Posterior vena cava (tissue), 2 donors: ENCODE measurements at regions of chr20 and their contacts with region 1.

Region 1: DNA sequence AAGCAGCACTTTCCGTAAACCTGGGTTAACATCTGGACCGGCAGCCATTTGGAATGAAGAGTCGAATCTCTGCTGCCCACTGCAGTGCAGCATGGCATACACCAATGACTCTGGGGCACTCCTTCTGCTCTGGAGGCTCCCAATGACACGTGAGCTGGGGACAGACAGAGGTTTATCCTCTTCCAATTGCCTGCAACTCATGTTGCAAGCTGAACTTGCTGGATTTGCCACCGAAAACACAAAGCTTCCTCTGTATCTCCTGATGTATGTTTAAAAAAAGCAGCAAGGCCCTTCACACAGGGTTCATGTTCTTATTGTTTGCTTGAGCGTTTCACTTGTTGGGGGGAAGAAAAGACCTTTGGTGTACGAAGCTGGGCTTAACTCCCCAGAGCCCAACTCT is 10.8 kb downstream of the NCOA5 start:
- DNase-seq: no peak

Region 2: DNA sequence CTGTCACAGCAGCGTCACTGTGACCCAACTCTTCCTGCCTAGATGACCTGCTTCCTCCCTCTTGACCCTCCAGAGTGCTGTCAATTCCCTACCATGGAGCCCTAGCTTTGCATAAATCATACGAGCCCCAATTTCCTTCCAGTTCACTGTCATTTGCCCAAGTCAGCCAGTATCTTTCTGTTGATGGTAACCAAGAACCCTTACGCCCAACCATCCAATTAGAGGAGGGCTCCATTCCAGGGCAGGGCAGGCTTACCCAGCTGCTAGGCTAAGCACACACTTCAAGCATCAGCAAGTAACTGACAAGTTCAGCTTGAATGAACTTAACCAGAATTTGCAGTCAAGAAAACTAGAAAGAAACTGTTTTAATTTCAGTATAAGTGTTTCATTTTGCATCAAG is 313.0 kb before region 1 on chr20:
- intact Hi-C with region 1: loop called in 1 of 2 experiments (anchors 5 kb)
- DNase-seq: no peak

Region 3: GRCh38 chr20:45867819-45868176 is 211.2 kb before region 1 on chr20:
- intact Hi-C with region 1: no loop called
- DNase-seq: no peak

Region 4: DNA sequence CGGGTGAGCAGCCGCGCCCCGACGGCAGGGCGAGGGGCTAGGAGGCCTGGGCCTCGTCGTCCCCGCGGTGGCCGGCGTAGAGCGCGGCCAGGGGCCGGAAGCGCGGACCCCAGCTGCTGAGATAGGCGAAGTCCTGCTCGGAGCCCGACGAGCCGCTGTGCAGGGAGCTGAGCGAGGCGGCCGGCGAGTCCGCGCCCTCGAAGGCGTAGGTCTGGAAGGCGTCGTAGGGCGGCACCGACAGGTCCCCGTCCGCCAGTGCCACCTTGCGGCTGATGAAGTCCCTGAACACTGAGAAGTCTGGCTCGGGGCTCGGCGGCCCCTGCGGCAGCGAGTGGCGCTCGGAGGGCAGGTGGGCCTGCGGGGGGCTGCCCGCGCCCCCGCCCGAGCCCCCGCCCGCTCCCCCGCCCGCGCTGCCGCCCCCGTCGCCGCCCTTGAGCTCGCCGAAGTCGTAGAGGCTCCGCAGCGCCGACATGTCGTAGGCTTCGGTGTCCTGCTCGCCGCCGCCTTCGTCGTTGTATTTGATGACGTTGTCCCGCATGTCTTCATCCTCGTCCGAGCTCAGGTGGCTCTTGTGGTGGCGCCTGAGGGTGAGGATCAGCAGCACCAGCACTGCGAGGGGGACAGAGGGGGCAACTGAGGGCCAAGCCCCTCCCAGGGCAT is 95.6 kb after region 1 on chr20:
- intact Hi-C with region 1: no loop called
- DNase-seq: peak; percentile 90